ENCODE measurements at regions of chr19 and their contacts with region 1.

Region 1: DNA sequence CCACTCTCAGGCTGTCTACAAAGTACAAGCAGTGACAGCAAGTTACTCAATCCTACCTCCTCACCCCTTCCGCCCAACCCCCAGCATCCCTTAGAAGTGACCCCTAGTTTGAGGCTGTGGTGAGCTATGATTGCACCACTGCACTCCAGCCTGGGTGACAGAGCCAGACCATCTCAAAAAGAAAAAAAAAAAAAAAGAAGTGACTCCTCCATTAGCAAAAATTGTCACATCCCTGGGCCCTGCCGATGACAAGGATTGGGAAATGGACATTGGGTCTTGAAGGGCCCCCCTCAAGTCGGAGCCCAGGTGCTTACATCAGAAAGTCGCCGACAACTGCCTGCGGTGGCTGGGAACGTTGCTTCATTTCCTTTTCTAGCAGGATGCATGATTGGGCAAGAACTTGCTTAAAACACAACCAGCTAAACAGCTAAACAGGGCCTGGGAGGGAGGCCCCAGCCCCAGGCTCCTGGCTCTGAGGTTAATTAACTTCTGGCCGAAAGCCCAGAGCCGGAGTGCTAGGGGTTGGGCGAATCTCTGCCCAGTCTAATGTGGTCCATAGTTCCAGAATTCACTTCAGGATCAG is 15.3 kb downstream of the RAB3D start:
- DNase-seq: peak; percentile 91
- H3K4me3 ChIP-seq: no peak overlapping the region
- H3K27ac ChIP-seq: no peak overlapping the region
- H3K4me1 ChIP-seq: peaks cover 16% of the 10 kb centered on the region
- H3K27me3 ChIP-seq: no peaks in the 10 kb centered on the region
- CTCF ChIP-seq: no peak

Region 2: DNA sequence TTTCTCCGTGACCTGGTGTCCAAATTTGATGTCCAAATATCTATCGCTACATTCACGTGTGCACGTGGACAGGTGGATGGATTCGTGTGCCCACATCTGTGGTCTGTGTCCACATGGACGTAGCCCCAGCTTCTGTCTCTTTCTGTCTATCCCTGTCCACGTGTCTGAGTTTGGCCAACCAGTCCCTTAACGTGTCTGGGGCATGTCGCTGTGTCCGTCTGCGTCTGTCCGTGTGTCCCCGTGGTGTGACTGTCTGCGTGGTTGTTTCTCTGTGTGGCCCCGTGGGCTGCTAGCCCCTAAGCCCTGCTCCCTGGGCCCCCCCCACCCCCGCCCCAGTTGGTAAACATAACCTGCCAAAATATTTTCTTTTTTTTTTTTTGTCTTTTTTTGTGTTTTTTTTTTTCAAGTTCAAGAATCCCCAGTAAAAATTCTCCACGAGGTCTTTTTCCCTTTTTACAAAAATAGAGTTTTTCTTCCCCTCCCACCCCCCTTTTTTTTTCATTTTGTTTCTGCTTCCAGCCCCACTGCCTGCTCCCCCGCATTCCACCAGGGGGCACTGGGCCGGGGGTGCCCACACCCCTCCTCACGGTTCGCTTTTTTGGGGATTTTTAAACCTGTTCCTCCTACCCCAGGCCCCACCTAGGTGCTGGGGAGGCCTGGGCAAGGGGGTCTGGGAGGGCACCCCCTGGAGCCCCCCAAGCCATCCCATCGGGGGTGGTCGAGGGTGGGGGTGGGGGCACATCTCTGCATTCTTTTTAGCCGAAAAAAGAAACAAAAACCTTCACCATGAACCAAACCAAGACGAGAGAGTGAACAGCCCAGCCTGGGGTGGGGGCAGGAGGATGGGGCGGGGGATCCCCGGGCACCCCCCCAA is 129.5 kb after region 1 on chr19:
- CTCF ChIA-PET with region 1: no interaction called
- dilution Hi-C with region 1: loop called (anchors 10 kb)
- in situ Hi-C with region 1: no loop called
- intact Hi-C with region 1: no loop called
- DNase-seq: no peak
- H3K4me3 ChIP-seq: no peak overlapping the region
- H3K27ac ChIP-seq: no peak overlapping the region
- H3K4me1 ChIP-seq: no peaks in the 10 kb centered on the region
- H3K27me3 ChIP-seq: no peaks in the 10 kb centered on the region
- CTCF ChIP-seq: peak; percentile 10 to 24

Measured in mammary epithelial cell (primary cell).